ENCODE measurements at regions of chr7 and their contacts with region 1.

Region 1: GRCh38 chr7:150448789-150449147 is 1.7 kb upstream of the GIMAP8 start:
- DNase-seq: peak; percentile 54
- H3K4me3 ChIP-seq: no peak overlapping the region
- H3K27ac ChIP-seq: no peak overlapping the region
- H3K4me1 ChIP-seq: no peaks in the 10 kb centered on the region
- H3K27me3 ChIP-seq: peaks cover 2% of the 10 kb centered on the region
- CTCF ChIP-seq: peak; percentile 87 to 98

Region 2: GRCh38 chr7:150356265-150356897 is 92.4 kb before region 1 on chr7:
- CTCF ChIA-PET with region 1: no interaction called
- dilution Hi-C with region 1: loop called (anchors 5 kb)
- in situ Hi-C with region 1: no loop called
- intact Hi-C with region 1: no loop called
- DNase-seq: no peak
- H3K4me3 ChIP-seq: no peak overlapping the region
- H3K27ac ChIP-seq: no peak overlapping the region
- H3K4me1 ChIP-seq: peaks cover 13% of the 10 kb centered on the region
- H3K27me3 ChIP-seq: no peaks in the 10 kb centered on the region
- CTCF ChIP-seq: peak; percentile 40 to 63

Region 3: GRCh38 chr7:150737265-150738055 is 288.7 kb after region 1 on chr7 and contains the start of gene GIMAP5:
- CTCF ChIA-PET with region 1: no interaction called
- dilution Hi-C with region 1: no loop called
- in situ Hi-C with region 1: loop called in 1 of 2 experiments (anchors 10 kb)
- intact Hi-C with region 1: loop called (anchors 5 kb)
- DNase-seq: no peak
- H3K4me3 ChIP-seq: no peak within 1 kb of the TSS
- H3K27ac ChIP-seq: peak within 1 kb of the TSS; percentile 74
- H3K4me1 ChIP-seq: peaks cover 20% of the 10 kb centered on the region
- H3K27me3 ChIP-seq: no peaks in the 10 kb centered on the region
- CTCF ChIP-seq: no peak
- total RNA-seq, gene GIMAP5: not detected

Region 4: DNA sequence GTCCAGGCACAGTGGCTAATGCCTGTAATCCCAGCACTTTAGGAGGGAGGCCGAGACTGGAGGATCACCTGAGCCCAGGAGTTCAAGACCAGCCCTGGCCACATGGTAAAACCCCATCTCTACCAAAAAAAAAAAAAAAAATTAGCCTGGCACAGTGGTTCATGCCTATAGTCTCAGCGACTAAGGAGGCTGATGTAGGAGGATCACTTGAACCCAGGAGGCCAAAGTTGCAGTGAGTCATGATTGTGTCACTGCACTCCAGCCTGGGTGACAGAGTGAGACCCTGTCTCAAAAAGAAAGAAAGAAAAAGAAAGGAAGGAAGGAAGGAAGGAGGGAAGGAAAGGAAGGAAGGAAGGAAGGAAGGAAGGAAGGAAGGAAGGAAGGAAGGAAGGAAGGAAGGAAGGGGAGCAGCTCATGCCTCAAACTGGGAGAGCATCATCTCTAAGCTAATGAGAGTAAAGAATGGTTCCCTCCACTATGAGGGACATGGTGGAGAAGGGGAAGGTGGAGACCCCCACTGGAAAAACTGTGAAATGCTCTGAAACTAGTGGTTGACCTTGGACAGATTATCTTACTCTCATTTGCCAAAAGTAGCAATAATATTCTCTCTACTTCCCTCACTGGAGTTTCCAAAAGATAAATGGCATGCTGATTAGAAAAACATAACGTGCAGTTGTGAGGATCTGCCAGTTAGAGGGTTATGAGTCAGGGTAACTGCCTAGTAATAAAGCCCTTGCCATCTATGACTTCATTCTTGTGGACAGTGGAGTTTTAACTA is 305.2 kb after region 1 on chr7:
- CTCF ChIA-PET with region 1: no interaction called
- dilution Hi-C with region 1: no loop called
- in situ Hi-C with region 1: loop called (anchors 5 to 10 kb)
- intact Hi-C with region 1: loop called (anchors 1 kb)
- DNase-seq: peak; percentile 27
- H3K4me3 ChIP-seq: no peak overlapping the region
- H3K27ac ChIP-seq: no peak overlapping the region
- H3K4me1 ChIP-seq: no peaks in the 10 kb centered on the region
- H3K27me3 ChIP-seq: no peaks in the 10 kb centered on the region
- CTCF ChIP-seq: peak; percentile 14 to 36

Region 5: GRCh38 chr7:150876817-150877526 is 428.2 kb after region 1 on chr7:
- CTCF ChIA-PET with region 1: interaction called, 5 read pairs
- dilution Hi-C with region 1: no loop called
- in situ Hi-C with region 1: no loop called
- intact Hi-C with region 1: loop called (anchors 2 kb)
- DNase-seq: peak; percentile 69
- H3K4me3 ChIP-seq: no peak overlapping the region
- H3K27ac ChIP-seq: no peak overlapping the region
- H3K4me1 ChIP-seq: peaks cover 15% of the 10 kb centered on the region
- H3K27me3 ChIP-seq: no peaks in the 10 kb centered on the region
- CTCF ChIP-seq: peak; percentile 58 to 64

Measured in mammary epithelial cell (primary cell).